ENCODE measurements at regions of chr5 and their contacts with region 1.

Region 1: DNA sequence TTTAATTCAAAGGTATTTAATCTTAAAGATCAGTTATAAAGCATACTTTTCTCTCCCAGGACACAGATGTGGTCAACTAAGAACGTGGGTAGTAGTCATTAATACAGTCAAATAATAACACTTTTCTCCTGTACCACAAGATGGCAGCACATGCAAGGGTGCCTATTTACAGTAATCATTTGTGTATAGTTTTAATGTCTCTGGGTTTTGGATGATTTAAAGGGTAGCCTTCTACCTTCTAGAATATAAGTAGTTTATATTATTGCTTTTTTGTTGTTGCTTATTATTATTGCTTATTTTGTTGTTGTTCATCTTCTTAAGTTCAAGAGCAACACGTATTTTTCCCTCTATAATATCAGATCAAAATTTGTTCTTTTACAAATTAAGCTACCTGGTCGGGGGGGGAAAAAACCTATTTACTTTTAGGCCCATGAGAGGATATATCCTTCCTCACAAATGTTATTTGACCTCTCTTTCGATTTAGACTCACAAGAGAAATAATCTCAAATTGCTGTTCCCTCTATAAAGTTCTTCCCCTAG is 59.6 kb upstream of the SLC27A6 start:
- DNase-seq: no peak
- ATAC-seq: peak; percentile 76
- H3K4me3 Mint-ChIP-seq: no peak overlapping the region
- H3K27ac Mint-ChIP-seq: no peak overlapping the region
- H3K4me1 Mint-ChIP-seq: no peaks in the 10 kb centered on the region
- H3K27me3 Mint-ChIP-seq: no peaks in the 10 kb centered on the region
- CTCF ChIP-seq: peak; percentile 61

Region 2: GRCh38 chr5:128927644-128928043 is 22.0 kb after region 1 on chr5:
- CTCF ChIA-PET with region 1: no interaction called
- POLR2A ChIA-PET with region 1: no interaction called
- DNase-seq: no peak
- ATAC-seq: no peak
- H3K4me3 Mint-ChIP-seq: no peak overlapping the region
- H3K27ac Mint-ChIP-seq: no peak overlapping the region
- H3K4me1 Mint-ChIP-seq: no peaks in the 10 kb centered on the region
- H3K27me3 Mint-ChIP-seq: no peaks in the 10 kb centered on the region
- CTCF ChIP-seq: no peak

Region 3: GRCh38 chr5:128974567-128974966 is 68.9 kb after region 1 on chr5:
- CTCF ChIA-PET with region 1: no interaction called
- POLR2A ChIA-PET with region 1: no interaction called
- DNase-seq: no peak
- ATAC-seq: no peak
- H3K4me3 Mint-ChIP-seq: no peak overlapping the region
- H3K27ac Mint-ChIP-seq: no peak overlapping the region
- H3K4me1 Mint-ChIP-seq: peaks cover 3% of the 10 kb centered on the region; the same call in 1 of the 2 replicates
- H3K27me3 Mint-ChIP-seq: no peaks in the 10 kb centered on the region
- CTCF ChIP-seq: no peak

Region 4: DNA sequence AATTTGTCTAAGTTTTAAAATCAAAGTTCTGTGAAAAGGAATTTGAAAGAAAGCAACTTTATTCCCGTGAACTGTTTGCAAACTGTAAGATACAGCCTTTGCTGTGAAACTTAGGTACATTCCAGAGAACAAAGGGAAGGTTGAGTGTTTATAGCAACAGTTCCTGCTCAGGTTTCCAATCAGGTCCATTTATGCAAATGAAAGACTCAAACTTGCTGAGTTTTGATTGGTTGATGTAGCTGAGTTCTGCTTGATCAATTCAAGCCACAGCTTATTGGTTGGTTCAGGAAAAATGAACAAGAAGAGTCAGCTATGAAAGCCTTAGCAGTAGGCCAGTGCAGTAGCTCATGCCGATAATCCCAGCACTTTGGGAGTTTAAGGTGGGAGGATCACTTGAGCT is 97.6 kb after region 1 on chr5:
- CTCF ChIA-PET with region 1: no interaction called
- POLR2A ChIA-PET with region 1: no interaction called
- DNase-seq: no peak
- ATAC-seq: peak; percentile 57
- H3K4me3 Mint-ChIP-seq: no peak overlapping the region
- H3K27ac Mint-ChIP-seq: peak overlapping the region; percentile 57
- H3K4me1 Mint-ChIP-seq: peaks cover 20% of the 10 kb centered on the region
- H3K27me3 Mint-ChIP-seq: no peaks in the 10 kb centered on the region
- CTCF ChIP-seq: no peak

Region 5: GRCh38 chr5:129094087-129094923 is 188.7 kb after region 1 on chr5 and contains the start of gene ISOC1:
- CTCF ChIA-PET with region 1: interaction called, 17 read pairs
- POLR2A ChIA-PET with region 1: no interaction called
- DNase-seq: peak; percentile 90
- ATAC-seq: peak; percentile 88
- H3K4me3 Mint-ChIP-seq: peak within 1 kb of the TSS; percentile 83
- H3K27ac Mint-ChIP-seq: peak within 1 kb of the TSS; percentile 69
- H3K4me1 Mint-ChIP-seq: peaks cover 29% of the 10 kb centered on the region
- H3K27me3 Mint-ChIP-seq: peaks cover 52% of the 10 kb centered on the region
- CTCF ChIP-seq: no peak
- total RNA-seq, gene ISOC1: 24.9 to 28.0 TPM (median 25.2 TPM) in 3 replicates

Region 6: DNA sequence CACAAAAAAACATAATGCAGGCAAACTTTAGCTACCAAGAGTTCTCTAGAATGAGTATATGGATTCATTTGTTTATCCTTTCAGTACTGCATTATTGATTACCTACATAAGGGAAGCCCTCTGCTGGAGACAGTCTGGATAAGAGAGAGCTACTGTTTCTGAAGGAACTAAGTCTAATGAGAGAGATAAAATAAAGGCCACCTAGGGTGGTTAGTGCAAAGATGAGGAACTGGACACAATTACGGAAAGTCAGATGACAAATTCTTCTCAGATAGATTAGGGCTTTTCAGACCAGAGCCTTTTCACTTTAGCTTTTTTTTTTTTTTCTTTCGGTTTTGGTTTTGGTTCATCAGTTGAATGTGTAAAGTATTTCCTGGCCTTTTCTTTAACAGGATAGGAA is 220.2 kb after region 1 on chr5:
- CTCF ChIA-PET with region 1: interaction called, 13 read pairs
- POLR2A ChIA-PET with region 1: no interaction called
- DNase-seq: no peak
- ATAC-seq: no peak
- H3K4me3 Mint-ChIP-seq: no peak overlapping the region
- H3K27ac Mint-ChIP-seq: no peak overlapping the region
- H3K4me1 Mint-ChIP-seq: peaks cover 5% of the 10 kb centered on the region; the same call in 1 of the 2 replicates
- H3K27me3 Mint-ChIP-seq: no peaks in the 10 kb centered on the region
- CTCF ChIP-seq: no peak